Endothelial cell of umbilical vein (primary cell): ENCODE measurements at regions of chr5 and their contacts with region 1.

Region 1: GRCh38 chr5:122076664-122077365 is 1.2 kb downstream of the LOX start:
- DNase-seq: peak; percentile 88
- H3K4me3 ChIP-seq: peak overlapping the region; percentile 51 to 68 (median 67)
- H3K27ac ChIP-seq: peak overlapping the region; percentile 88
- H3K4me1 ChIP-seq: peaks cover 40% of the 10 kb centered on the region
- H3K27me3 ChIP-seq: no peaks in the 10 kb centered on the region
- CTCF ChIP-seq: peak; percentile 85 to 93
- POLR2A ChIP-seq: no peak

Region 2: GRCh38 chr5:120463991-120464626 is 1612.7 kb before region 1 on chr5 and contains the start of gene PRR16:
- CTCF ChIA-PET with region 1: no interaction called
- POLR2A ChIA-PET with region 1: no interaction called
- dilution Hi-C with region 1: no loop called
- intact Hi-C with region 1: loop called (anchors 10 kb)
- DNase-seq: peak; percentile 62
- H3K4me3 ChIP-seq: peak within 1 kb of the TSS; percentile 61 to 84 (median 81)
- H3K27ac ChIP-seq: no peak within 1 kb of the TSS
- H3K4me1 ChIP-seq: peaks cover 16% of the 10 kb centered on the region
- H3K27me3 ChIP-seq: peaks cover 1 to 24% of the 10 kb centered on the region in 2 experiments
- CTCF ChIP-seq: peak; percentile 3 to 25
- POLR2A ChIP-seq: no peak
- total RNA-seq, gene PRR16: 0.91 and 2.3 TPM in 2 replicates

Region 3: GRCh38 chr5:121189342-121190305 is 887.2 kb before region 1 on chr5:
- CTCF ChIA-PET with region 1: interaction called, 3 read pairs
- POLR2A ChIA-PET with region 1: no interaction called
- dilution Hi-C with region 1: no loop called
- intact Hi-C with region 1: loop called (anchors 5 kb)
- DNase-seq: peak; percentile 75
- H3K4me3 ChIP-seq: no peak overlapping the region
- H3K27ac ChIP-seq: peak overlapping the region; percentile 69
- H3K4me1 ChIP-seq: peaks cover 19% of the 10 kb centered on the region
- H3K27me3 ChIP-seq: no peaks in the 10 kb centered on the region
- CTCF ChIP-seq: no peak
- POLR2A ChIP-seq: no peak

Region 4: DNA sequence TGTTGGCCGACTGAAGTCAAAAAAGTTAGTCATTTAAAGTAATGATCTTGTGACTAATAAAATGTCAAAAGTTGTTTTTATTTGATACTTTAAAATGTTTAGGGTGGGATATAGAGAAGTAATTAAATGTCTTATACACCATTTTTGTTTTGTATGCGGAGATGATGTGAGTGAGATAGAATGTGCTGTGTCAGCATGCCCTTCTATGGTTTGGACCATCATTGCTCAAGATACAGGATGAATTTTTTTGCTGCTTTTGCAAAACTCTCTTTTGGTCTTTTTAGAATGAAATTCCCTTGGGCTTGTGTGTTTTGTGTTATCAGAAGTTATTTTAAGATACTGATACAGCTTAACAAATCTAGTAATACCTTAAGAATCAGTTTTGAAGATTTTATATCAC is 102.6 kb before region 1 on chr5:
- CTCF ChIA-PET with region 1: interaction called, 164 read pairs
- POLR2A ChIA-PET with region 1: interaction called, 16 read pairs
- dilution Hi-C with region 1: no loop called
- intact Hi-C with region 1: loop called (anchors 1 kb)
- DNase-seq: no peak
- H3K4me3 ChIP-seq: no peak overlapping the region
- H3K27ac ChIP-seq: no peak overlapping the region
- H3K4me1 ChIP-seq: peaks cover 23% of the 10 kb centered on the region
- H3K27me3 ChIP-seq: no peaks in the 10 kb centered on the region
- CTCF ChIP-seq: no peak
- POLR2A ChIP-seq: no peak

Region 5: GRCh38 chr5:122030251-122030650 is 46.6 kb before region 1 on chr5:
- CTCF ChIA-PET with region 1: interaction called, 8 read pairs
- POLR2A ChIA-PET with region 1: no interaction called
- dilution Hi-C with region 1: no loop called
- intact Hi-C with region 1: loop called (anchors 1 kb)
- DNase-seq: no peak
- H3K4me3 ChIP-seq: no peak overlapping the region
- H3K27ac ChIP-seq: no peak overlapping the region
- H3K4me1 ChIP-seq: no peaks in the 10 kb centered on the region
- H3K27me3 ChIP-seq: no peaks in the 10 kb centered on the region
- CTCF ChIP-seq: no peak
- POLR2A ChIP-seq: no peak

Region 6: DNA sequence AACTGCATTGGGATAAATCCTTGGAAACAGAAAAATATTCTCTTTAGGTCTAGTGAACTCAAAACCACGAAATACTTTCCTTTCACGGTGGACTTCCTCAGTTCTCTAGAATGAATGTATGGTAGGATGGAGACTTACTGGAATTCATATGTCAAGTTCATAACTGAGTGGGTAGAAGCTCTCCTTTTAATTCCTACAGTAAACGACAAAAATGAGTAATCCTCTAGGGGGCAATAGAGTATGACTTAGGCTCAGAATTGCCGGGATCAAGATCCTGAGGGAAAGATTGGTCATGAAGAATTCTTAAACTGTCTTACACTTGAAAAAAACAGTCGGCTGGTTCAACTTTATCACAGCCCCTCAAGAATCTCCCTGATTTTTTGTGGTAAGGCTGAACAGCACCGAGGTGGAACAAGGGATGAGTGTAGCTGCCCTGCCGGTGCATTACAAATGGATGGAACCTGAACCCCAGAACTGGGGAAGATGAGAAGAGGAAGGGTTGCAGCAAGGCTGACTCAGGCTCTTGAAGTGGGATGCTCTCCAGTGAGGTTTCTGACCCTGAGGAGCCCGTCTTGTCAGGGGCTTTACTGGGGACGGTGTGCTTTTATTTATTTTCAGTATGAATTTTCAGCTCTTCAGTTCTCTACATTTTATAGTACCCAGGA is 15.3 kb after region 1 on chr5:
- CTCF ChIA-PET with region 1: interaction called, 21 read pairs
- POLR2A ChIA-PET with region 1: no interaction called
- dilution Hi-C with region 1: no loop called
- intact Hi-C with region 1: loop called (anchors 1 kb)
- DNase-seq: peak; percentile 48
- H3K4me3 ChIP-seq: no peak overlapping the region
- H3K27ac ChIP-seq: no peak overlapping the region
- H3K4me1 ChIP-seq: peaks cover 19% of the 10 kb centered on the region
- H3K27me3 ChIP-seq: no peaks in the 10 kb centered on the region
- CTCF ChIP-seq: peak; percentile 26 to 32
- POLR2A ChIP-seq: no peak

Region 7: GRCh38 chr5:122182491-122182921 is 105.7 kb after region 1 on chr5:
- CTCF ChIA-PET with region 1: interaction called, 9 read pairs
- POLR2A ChIA-PET with region 1: no interaction called
- dilution Hi-C with region 1: loop called (anchors 25 kb)
- intact Hi-C with region 1: loop called (anchors 2 kb)
- DNase-seq: peak; percentile 93
- H3K4me3 ChIP-seq: peak overlapping the region in 1 of 3 experiments; percentile 57
- H3K27ac ChIP-seq: peak overlapping the region; percentile 84
- H3K4me1 ChIP-seq: peaks cover 41% of the 10 kb centered on the region
- H3K27me3 ChIP-seq: no peaks in the 10 kb centered on the region
- CTCF ChIP-seq: no peak
- POLR2A ChIP-seq: no peak

Region 8: GRCh38 chr5:122774861-122775549 is 698.2 kb after region 1 on chr5 and contains the start of gene SNX2:
- CTCF ChIA-PET with region 1: no interaction called
- POLR2A ChIA-PET with region 1: no interaction called
- dilution Hi-C with region 1: no loop called
- intact Hi-C with region 1: no loop called
- DNase-seq: peak; percentile 89
- H3K4me3 ChIP-seq: peak within 1 kb of the TSS; percentile 84 to 88 (median 86)
- H3K27ac ChIP-seq: peak within 1 kb of the TSS; percentile 44
- H3K4me1 ChIP-seq: peaks cover 18% of the 10 kb centered on the region
- H3K27me3 ChIP-seq: peaks cover 2 to 7% of the 10 kb centered on the region in 2 experiments
- CTCF ChIP-seq: peak in 1 of 2 donors; percentile 18
- POLR2A ChIP-seq: peak; percentile 62
- total RNA-seq, gene SNX2: 46.3 and 51.2 TPM in 2 replicates